ENCODE measurements at regions of chr13 and their contacts with region 1.

Region 1: GRCh38 chr13:30422054-30422839 is at the start of gene UBE2L5:
- DNase-seq: peak; percentile 76
- H3K4me3 Mint-ChIP-seq: peak within 1 kb of the TSS; percentile 73
- H3K27ac Mint-ChIP-seq: peak within 1 kb of the TSS; percentile 47
- H3K4me1 Mint-ChIP-seq: peaks cover 7% of the 10 kb centered on the region
- H3K27me3 Mint-ChIP-seq: no peaks in the 10 kb centered on the region
- CTCF ChIP-seq: no peak
- total RNA-seq, gene UBE2L5: not detected in 2 replicates

Region 2: DNA sequence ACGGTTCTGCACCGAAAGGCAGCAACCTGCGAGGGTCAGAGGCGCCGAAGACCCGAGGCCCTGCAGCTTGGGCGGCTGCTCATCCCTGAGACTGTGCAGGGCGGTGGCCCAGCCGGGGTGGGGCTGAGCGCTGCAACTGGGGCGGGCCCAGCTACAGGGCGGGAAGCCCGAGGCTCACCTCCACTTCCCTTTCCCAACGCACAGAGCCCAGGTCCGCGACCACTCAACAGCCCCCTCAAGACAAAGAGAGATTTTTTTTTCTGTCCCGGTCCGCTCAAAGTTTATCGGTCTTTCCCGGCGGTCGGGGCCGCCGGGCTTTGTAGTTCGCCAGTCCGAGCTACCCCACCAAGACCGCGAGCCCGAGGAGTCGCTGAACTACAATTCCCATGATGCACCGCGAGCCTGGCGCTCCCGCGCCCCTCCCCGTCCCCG is 115.5 kb before region 1 on chr13:
- CTCF ChIA-PET with region 1: interaction called, 4 read pairs
- POLR2A ChIA-PET with region 1: interaction called, 10 read pairs
- intact Hi-C with region 1: loop called (anchors 10 kb)
- DNase-seq: peak; percentile 88
- H3K4me3 Mint-ChIP-seq: peak overlapping the region; percentile 78
- H3K27ac Mint-ChIP-seq: no peak overlapping the region
- H3K4me1 Mint-ChIP-seq: peaks cover 43% of the 10 kb centered on the region
- H3K27me3 Mint-ChIP-seq: no peaks in the 10 kb centered on the region
- CTCF ChIP-seq: no peak

Measured in MCF 10A (cell line).